GM12878 (cell line): ENCODE measurements at regions of chr5 and their contacts with region 1.

Region 1: GRCh38 chr5:150161242-150162141 is 5.1 kb upstream of the CDX1 start:
- DNase-seq: no peak
- ATAC-seq: peak; percentile 92
- H3K4me3 ChIP-seq: no peak overlapping the region
- H3K27ac ChIP-seq: no peak overlapping the region
- H3K4me1 ChIP-seq: peaks cover 9% of the 10 kb centered on the region
- H3K27me3 ChIP-seq: no peaks in the 10 kb centered on the region; a peak in 1 of 4 replicates
- CTCF ChIP-seq: peak; percentile 93 to 99 (median 93)
- EP300 ChIP-seq: no peak
- POLR2A ChIP-seq: no peak
- RAD21 ChIP-seq: peak; percentile 78

Region 2: DNA sequence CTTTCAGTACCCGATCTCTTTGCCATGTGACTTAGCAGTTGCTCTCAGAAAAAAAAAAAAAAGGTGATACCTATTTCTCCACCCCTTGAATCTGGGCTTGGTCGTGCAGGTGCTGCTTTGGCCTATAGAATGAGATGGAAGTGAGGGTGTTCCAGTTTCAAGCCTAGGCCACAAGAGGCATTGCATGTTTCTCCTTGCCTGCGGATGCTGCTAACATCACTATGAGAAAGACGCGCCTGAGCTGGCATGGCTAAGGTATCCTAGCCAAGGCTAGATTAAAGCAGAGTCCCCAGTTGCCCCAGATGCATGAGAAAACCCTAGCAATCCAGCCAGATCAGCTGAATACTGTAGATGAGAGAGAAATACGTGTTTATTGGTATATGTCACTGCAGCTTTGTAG is 60.5 kb before region 1 on chr5:
- CTCF ChIA-PET with region 1: no interaction called
- POLR2A ChIA-PET with region 1: no interaction called
- RAD21 ChIA-PET with region 1: no interaction called
- SMC1A ChIA-PET with region 1: no interaction called
- in situ Hi-C with region 1: no loop called
- intact Hi-C with region 1: no loop called
- DNase-seq: no peak
- ATAC-seq: no peak
- H3K4me3 ChIP-seq: no peak overlapping the region
- H3K27ac ChIP-seq: no peak overlapping the region
- H3K4me1 ChIP-seq: peaks cover 14% of the 10 kb centered on the region
- H3K27me3 ChIP-seq: no peaks in the 10 kb centered on the region
- CTCF ChIP-seq: no peak
- EP300 ChIP-seq: no peak
- POLR2A ChIP-seq: no peak
- RAD21 ChIP-seq: no peak

Region 3: DNA sequence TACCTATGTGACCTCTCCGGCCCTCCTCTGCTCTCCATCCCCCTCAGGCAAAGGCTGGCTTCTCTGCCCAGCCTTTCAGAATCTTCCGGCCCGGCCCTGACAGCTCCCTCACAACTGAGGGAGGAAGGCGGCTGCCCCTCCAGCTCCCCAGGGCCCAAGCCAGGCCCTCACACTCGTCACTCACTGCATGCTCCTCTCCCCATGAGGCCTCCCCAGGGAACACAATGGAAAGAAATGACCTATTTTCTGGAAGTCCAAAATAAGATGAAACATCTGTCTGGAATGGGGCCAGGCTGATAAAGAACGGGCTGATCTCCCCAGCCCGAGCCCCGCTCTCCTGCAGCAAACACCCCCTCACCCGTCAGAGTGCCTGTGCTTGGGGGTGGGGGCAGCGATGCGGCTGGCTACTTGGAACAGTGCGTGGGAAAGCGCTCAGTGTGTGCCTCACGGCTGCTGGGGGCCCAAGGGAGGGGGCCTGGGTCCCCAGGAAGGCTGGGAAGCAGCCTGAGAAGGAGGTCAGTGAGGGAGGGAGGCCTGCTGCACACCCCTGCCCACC is 17.2 kb before region 1 on chr5:
- CTCF ChIA-PET with region 1: interaction called, 4 read pairs
- POLR2A ChIA-PET with region 1: interaction called, 3 read pairs
- RAD21 ChIA-PET with region 1: interaction called, 13 read pairs
- SMC1A ChIA-PET with region 1: interaction called, 10 read pairs
- in situ Hi-C with region 1: no loop called
- intact Hi-C with region 1: no loop called
- DNase-seq: no peak
- ATAC-seq: no peak
- H3K4me3 ChIP-seq: no peak overlapping the region
- H3K27ac ChIP-seq: no peak overlapping the region
- H3K4me1 ChIP-seq: no peaks in the 10 kb centered on the region
- H3K27me3 ChIP-seq: no peaks in the 10 kb centered on the region
- CTCF ChIP-seq: no peak
- EP300 ChIP-seq: no peak
- POLR2A ChIP-seq: no peak
- RAD21 ChIP-seq: no peak

Region 4: DNA sequence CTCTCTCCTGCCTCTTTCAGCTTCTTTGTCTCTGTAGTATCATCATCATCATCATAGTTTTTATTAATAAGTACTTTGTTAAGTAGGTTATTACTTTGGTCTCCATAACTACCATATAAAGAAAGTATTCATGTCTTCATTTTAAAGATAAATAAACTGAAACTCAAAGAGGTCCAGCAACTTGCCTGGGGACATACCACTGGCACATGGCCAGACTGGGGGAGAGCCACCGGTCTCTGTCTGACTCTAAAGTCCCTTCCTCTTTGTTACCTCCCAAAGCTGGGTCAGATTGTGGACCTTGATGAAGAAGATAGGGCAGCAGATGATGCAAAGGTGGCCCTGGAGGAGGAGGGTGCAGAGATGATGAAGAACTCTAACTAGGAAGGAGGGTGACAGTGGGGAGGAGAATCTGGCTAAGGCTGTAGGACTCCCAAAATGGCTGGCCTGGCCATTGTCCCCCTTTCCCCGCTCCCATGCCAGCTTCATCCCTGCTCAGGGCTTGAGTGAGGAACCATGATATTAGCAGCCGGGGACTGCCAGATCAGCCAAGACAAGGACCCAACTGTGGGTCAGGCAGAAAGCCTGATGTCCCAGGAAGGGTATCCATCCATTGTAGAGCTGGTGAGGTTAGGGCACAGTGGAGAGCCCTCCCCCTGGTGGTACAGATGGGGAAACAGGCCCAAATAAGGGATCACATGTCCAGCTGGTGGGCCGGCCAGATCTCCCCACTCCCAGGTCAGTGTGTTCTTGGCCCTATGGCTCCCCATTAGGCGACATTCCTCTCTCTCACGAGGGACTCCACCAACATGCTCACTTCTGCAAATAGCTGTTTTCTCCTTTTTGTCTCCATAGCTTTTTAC is 13.8 kb after region 1 on chr5:
- CTCF ChIA-PET with region 1: interaction called, 68 read pairs
- POLR2A ChIA-PET with region 1: interaction called, 3 read pairs
- RAD21 ChIA-PET with region 1: interaction called, 8 read pairs
- SMC1A ChIA-PET with region 1: interaction called, 5 read pairs
- in situ Hi-C with region 1: no loop called
- intact Hi-C with region 1: no loop called
- DNase-seq: no peak
- ATAC-seq: peak; percentile 84
- H3K4me3 ChIP-seq: no peak overlapping the region
- H3K27ac ChIP-seq: no peak overlapping the region
- H3K4me1 ChIP-seq: no peaks in the 10 kb centered on the region
- H3K27me3 ChIP-seq: no peaks in the 10 kb centered on the region; a peak in 1 of 4 replicates
- CTCF ChIP-seq: peak; percentile 33 to 62 (median 42); a peak in 5 of 6 replicates
- EP300 ChIP-seq: no peak
- POLR2A ChIP-seq: no peak
- RAD21 ChIP-seq: no peak

Region 5: GRCh38 chr5:150209020-150209635 is 47.6 kb after region 1 on chr5:
- CTCF ChIA-PET with region 1: interaction called, 13 read pairs
- POLR2A ChIA-PET with region 1: no interaction called
- RAD21 ChIA-PET with region 1: interaction called, 5 read pairs
- SMC1A ChIA-PET with region 1: interaction called, 3 read pairs
- in situ Hi-C with region 1: no loop called
- intact Hi-C with region 1: no loop called
- DNase-seq: no peak
- ATAC-seq: peak; percentile 74
- H3K4me3 ChIP-seq: no peak overlapping the region
- H3K27ac ChIP-seq: no peak overlapping the region
- H3K4me1 ChIP-seq: no peaks in the 10 kb centered on the region
- H3K27me3 ChIP-seq: peaks cover 0 to 3% of the 10 kb centered on the region in 2 experiments; a peak in 2 of 4 replicates
- CTCF ChIP-seq: peak in 1 of 3 experiments; percentile 19; a peak in 2 of 6 replicates
- EP300 ChIP-seq: 0 out of 4 replicates have a peak, but pooled peaks of 1 of the 2 experiments have one; percentile 8
- POLR2A ChIP-seq: no peak
- RAD21 ChIP-seq: no peak

Region 6: DNA sequence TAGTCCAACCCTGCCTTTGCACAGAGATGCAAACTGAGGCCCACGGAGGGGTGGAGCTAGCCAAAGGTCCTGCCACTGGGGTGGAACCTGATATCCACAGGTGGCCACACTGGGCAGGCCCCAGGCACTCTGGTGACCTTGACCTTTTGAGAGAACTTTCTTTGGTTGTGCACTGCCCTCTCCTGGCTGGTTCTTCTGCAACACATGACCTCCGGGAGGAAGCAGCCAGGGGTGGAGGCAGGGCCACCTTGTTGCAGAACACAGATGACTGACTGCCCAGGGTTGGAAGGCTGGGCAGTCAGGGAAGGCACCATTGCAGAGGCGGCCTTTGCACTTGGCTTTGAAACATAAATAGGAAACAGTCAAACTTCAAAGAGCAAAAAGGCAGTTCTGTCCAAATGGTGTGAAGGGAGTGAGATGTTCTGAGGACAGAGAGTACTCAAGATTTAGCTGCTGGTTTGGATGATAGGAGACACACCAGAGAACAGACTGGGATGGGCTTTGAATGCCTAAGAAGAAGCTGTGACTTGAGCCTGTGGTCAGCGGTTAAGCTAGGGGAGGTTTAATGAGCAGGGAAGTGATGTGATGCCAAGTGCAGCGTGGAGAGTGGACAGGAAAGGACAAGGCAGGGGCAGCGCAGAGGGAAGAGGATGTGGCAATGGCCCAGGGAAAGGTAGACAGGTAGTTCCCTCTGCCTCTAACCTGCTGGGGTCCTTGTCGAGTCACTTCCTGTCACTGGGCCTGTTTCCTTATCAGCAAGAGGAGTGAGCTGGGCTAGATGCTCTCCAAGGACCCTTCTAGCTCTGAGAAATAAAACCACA is 189.2 kb after region 1 on chr5:
- CTCF ChIA-PET with region 1: interaction called, 16 read pairs
- POLR2A ChIA-PET with region 1: no interaction called
- RAD21 ChIA-PET with region 1: interaction called, 4 read pairs
- SMC1A ChIA-PET with region 1: interaction called, 7 read pairs
- in situ Hi-C with region 1: no loop called
- intact Hi-C with region 1: loop called (anchors 1 kb)
- DNase-seq: peak; percentile 13
- ATAC-seq: peak; percentile 99
- H3K4me3 ChIP-seq: no peak overlapping the region
- H3K27ac ChIP-seq: no peak overlapping the region
- H3K4me1 ChIP-seq: peaks cover 8% of the 10 kb centered on the region; the same call in 1 of the 2 replicates
- H3K27me3 ChIP-seq: no peaks in the 10 kb centered on the region
- CTCF ChIP-seq: peak; percentile 69 to 79 (median 73)
- EP300 ChIP-seq: no peak
- POLR2A ChIP-seq: no peak
- RAD21 ChIP-seq: peak; percentile 74